ENCODE measurements at regions of chr9 and their contacts with region 1.

Region 1: DNA sequence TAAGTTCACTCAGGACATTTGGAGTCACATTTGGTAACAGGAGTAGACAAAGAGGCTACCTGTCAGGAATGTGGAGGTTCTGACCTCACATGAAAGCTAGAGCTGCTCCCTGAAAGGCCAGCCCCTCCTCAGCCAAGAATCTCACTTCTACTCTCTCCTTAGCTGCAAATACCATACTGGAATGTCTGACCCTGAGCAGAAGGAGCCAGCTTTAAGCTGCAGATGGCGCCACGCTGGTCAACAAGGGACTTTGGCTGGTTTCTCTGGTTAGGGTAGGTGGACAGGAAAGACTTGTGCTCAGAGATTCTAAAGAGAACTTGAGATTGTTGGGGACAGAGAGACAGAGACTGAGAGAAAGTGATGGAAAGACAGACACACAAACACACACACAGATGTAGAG is 21.9 kb downstream of the ASTN2 start:
- DNase-seq: no peak
- H3K4me3 ChIP-seq: no peak overlapping the region
- H3K27ac ChIP-seq: no peak overlapping the region
- H3K4me1 ChIP-seq: no peaks in the 10 kb centered on the region
- H3K27me3 ChIP-seq: no peaks in the 10 kb centered on the region
- CTCF ChIP-seq: no peak

Region 2: DNA sequence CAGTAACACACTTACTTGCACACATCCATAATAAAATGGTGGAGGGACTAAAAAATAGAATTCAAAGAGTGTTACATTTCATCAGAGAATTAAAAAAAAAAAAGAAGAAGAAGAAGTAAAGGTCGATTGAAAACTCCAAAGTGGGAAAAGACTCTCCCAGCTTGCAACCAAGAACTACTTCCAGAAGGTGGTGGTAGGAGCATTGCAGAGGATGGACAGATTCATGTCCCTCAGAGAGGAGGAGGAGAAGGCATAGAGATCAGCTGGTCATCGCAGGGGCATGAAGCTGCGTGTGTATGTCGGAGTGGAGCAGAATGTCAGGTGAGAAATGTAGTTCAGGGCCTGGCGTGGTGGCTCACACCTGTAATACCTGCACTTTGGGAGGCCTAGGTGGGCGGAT is 97.3 kb before region 1 on chr9:
- CTCF ChIA-PET with region 1: no interaction called
- dilution Hi-C with region 1: loop called (anchors 5 kb)
- in situ Hi-C with region 1: no loop called
- intact Hi-C with region 1: no loop called
- DNase-seq: no peak
- H3K4me3 ChIP-seq: no peak overlapping the region
- H3K27ac ChIP-seq: no peak overlapping the region
- H3K4me1 ChIP-seq: no peaks in the 10 kb centered on the region
- H3K27me3 ChIP-seq: no peaks in the 10 kb centered on the region
- CTCF ChIP-seq: no peak

Measured in mammary epithelial cell (primary cell).